Activated CD4-positive, alpha-beta T cell treated with anti-CD3 and anti-CD28 coated beads, Interleukin-2, amount 10 ng/mL, durations not matched to agents 24 days and 14 days (primary cell): ENCODE measurements at regions of chr1 and their contacts with region 1.

Region 1: GRCh38 chr1:151945725-151946364 is 36.5 kb upstream of the THEM4 start:
- DNase-seq: peak; percentile 94
- H3K4me3 Mint-ChIP-seq: peak overlapping the region; percentile 74
- H3K27ac Mint-ChIP-seq: peak overlapping the region; percentile 94
- H3K4me1 Mint-ChIP-seq: peaks cover 31% of the 10 kb centered on the region
- H3K27me3 Mint-ChIP-seq: no peaks in the 10 kb centered on the region

Region 2: DNA sequence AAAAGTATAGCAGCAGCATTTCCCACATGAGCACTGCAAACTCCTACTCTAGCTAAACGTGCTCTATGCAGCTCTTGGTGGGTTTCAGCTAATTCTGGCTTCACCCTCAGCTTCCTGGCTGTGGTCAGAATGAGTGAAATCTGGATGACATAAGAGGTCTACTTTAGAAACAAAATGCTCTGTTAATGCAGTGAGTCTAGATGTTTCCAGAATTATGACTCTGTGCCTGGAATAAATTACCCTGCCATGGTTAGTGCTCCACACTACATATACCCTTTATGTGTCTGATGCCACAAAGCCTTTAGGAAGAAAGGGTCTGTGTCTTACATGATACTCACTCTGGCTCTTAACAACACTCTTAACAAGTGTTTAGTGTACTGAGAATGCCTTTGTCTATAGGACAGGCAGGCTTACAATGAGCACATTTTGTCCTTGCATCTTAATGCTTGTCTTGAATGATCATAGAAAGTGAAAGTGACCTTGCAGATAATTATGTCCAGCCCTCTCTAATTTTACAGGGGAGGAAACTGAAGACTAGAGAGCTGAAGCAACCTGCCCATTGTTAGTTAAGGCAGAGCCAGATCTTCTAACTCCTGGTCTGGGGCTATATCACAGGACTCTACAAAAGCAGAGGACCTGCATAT is 38.6 kb after region 1 on chr1:
- intact Hi-C with region 1: loop called (anchors 1 kb)
- DNase-seq: peak; percentile 81
- H3K4me3 Mint-ChIP-seq: peak overlapping the region; percentile 78
- H3K27ac Mint-ChIP-seq: peak overlapping the region; percentile 92
- H3K4me1 Mint-ChIP-seq: peaks cover 53% of the 10 kb centered on the region
- H3K27me3 Mint-ChIP-seq: no peaks in the 10 kb centered on the region